Right ventricle myocardium inferior (tissue), 1 donor: ENCODE measurements at regions of chr6 and their contacts with region 1.

Region 1: GRCh38 chr6:148736774-148737412 is 9.9 kb upstream of the UST start:
- DNase-seq: no peak
- ATAC-seq: no peak

Region 2: DNA sequence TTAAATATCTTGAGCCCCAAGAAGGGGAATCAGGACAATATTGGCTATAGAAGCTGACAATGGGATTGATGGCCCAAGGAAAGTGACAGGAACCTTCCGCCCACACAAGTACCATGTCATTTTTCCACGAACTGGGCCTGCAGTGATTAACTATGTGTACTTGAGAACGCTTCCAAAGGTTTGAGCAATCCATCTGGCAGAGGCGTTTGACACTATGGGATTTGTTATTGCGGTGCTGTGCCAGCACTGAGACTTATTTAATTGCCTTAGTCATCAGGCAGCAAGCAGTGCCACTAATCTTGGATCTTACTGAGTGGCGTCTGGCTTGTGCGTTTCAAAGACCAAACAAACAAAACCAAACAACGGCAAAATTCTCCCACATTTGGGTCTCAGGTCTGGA is 125.7 kb before region 1 on chr6:
- intact Hi-C with region 1: loop called (anchors 10 kb)
- DNase-seq: peak; percentile 65
- ATAC-seq: peak; percentile 96

Region 3: GRCh38 chr6:148760568-148761526 is 24.0 kb after region 1 on chr6:
- intact Hi-C with region 1: no loop called
- DNase-seq: peak; percentile 88
- ATAC-seq: peak; percentile 93